Heart left ventricle (tissue), 16 donors: ENCODE measurements at regions of chr12 and their contacts with region 1.

Region 1: GRCh38 chr12:106276032-106276740 is 26.3 kb upstream of the TCP11L2 start:
- DNase-seq: no peak
- ATAC-seq: no peak
- H3K4me3 ChIP-seq: no peak overlapping the region
- H3K27ac ChIP-seq: no peak overlapping the region
- H3K4me1 ChIP-seq: peaks cover 0 to 16% (median 4%) of the 10 kb centered on the region in 12 donors
- H3K27me3 ChIP-seq: no peaks in the 10 kb centered on the region
- CTCF ChIP-seq: no peak
- POLR2A ChIP-seq: no peak

Region 2: DNA sequence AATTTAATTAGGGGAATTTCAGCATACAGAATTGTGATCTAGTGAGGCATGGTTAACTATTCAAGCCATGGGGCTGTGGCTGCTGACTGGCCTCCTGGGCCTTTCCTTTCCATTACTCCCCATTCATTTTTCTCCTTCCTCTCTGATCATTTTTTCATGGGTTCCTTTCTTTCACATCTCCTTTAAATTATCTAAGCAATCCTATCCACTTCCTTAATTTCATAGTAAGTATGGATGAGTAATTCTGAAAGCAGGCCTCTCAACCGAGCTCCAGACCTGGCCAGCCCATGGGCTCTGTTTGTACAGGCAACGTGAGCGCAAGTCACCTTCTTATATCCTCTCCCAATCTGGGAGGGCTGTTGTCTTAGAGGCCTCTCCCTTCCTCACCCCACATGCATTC is 41.7 kb before region 1 on chr12:
- intact Hi-C with region 1: loop called in 3 of 10 experiments (anchors 5 kb)
- DNase-seq: no peak
- ATAC-seq: no peak
- H3K4me3 ChIP-seq: no peak overlapping the region
- H3K27ac ChIP-seq: no peak overlapping the region
- H3K4me1 ChIP-seq: peaks cover 0 to 21% (median 4%) of the 10 kb centered on the region in 12 donors
- H3K27me3 ChIP-seq: no peaks in the 10 kb centered on the region
- CTCF ChIP-seq: no peak
- POLR2A ChIP-seq: no peak

Region 3: DNA sequence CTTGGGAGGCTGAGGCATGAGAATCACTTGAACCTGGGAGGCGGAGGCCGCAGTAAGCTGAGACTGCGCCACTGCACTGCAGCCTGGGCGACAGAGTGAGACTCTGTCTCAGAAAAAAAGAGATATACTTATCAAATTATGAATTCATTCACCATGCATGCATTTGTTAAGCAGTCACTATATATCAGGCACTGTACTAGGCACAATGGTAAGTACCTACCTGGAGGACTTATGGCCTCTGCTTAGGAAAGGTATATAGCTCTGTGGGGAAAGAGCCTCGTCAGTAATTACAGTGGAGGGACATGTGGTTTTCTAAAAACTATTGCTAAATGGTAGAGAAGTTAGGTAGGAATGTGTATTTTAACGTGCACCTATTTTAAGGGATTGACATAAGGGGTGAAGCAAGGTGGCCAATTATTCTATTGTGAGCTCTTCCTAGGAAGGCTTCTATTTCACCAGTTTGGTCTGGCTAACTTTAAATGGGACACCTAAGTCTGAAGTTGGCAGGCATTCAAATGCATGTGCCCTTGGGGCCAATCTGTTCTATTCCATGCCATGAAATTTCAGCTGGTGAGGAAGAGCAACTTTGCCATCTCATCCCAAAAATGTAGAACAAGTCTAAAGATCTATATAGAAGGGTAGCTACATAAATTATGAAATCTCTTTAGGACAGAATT is 41.4 kb after region 1 on chr12:
- intact Hi-C with region 1: no loop called
- DNase-seq: peak in 1 of 5 donors; percentile 25
- ATAC-seq: peak; percentile 35 to 79 (median 48)
- H3K4me3 ChIP-seq: no peak overlapping the region
- H3K27ac ChIP-seq: peak overlapping the region in 9 of 12 donors; percentile 18 to 86 (median 67)
- H3K4me1 ChIP-seq: peaks cover 0 to 51% (median 17%) of the 10 kb centered on the region in 12 donors
- H3K27me3 ChIP-seq: no peaks in the 10 kb centered on the region
- CTCF ChIP-seq: no peak
- POLR2A ChIP-seq: no peak